Heart right ventricle (tissue), 16 donors: ENCODE measurements at regions of chr13 and their contacts with region 1.

Region 1: DNA sequence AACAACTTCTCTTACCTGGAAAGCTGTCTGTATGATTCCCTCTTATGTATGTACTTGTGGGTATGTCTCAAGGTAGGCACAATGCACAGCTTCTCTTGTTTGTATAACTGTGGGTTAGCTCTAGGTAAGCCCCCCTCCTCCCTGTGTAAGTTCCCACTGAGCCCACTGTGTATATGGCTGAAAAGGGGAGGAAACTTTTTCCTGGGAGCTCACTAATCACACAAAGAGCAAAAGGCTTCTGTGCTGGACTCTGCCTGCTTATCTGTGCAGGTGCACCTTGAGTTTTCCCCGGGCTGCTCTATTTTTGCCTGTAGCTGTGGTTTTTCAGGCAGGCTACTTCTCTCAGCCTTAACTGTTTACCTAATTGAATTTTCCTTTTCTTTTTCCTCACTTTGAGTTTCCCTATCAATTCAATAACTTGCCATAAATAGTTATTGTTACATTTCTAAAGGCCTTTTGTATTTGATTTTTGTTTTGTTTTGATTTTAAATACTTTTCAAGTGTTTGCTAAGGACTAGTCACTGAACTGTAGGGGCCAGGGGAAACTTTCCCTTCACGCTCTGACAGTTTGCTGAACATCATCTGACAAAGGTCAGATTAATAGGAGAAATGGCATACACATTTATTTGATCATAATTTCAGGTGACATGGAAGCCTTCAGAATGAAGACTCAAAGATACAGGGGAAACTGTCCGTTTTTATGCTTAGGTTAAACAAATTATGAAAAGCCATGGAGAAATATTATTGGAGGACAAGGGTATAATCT is 423.5 kb upstream of the ATXN8OS start:
- DNase-seq: no peak
- ATAC-seq: no peak
- H3K4me3 ChIP-seq: no peak overlapping the region
- H3K27ac ChIP-seq: no peak overlapping the region
- H3K4me1 ChIP-seq: no peaks in the 10 kb centered on the region
- H3K27me3 ChIP-seq: no peaks in the 10 kb centered on the region
- CTCF ChIP-seq: no peak

Region 2: GRCh38 chr13:69660155-69660554 is 23.9 kb before region 1 on chr13:
- intact Hi-C with region 1: loop called in 1 of 10 experiments (anchors 2 kb)
- DNase-seq: no peak
- ATAC-seq: no peak
- H3K4me3 ChIP-seq: no peak overlapping the region
- H3K27ac ChIP-seq: no peak overlapping the region
- H3K4me1 ChIP-seq: no peaks in the 10 kb centered on the region
- H3K27me3 ChIP-seq: no peaks in the 10 kb centered on the region
- CTCF ChIP-seq: no peak